ENCODE measurements at regions of chr12 and their contacts with region 1.

Region 1: DNA sequence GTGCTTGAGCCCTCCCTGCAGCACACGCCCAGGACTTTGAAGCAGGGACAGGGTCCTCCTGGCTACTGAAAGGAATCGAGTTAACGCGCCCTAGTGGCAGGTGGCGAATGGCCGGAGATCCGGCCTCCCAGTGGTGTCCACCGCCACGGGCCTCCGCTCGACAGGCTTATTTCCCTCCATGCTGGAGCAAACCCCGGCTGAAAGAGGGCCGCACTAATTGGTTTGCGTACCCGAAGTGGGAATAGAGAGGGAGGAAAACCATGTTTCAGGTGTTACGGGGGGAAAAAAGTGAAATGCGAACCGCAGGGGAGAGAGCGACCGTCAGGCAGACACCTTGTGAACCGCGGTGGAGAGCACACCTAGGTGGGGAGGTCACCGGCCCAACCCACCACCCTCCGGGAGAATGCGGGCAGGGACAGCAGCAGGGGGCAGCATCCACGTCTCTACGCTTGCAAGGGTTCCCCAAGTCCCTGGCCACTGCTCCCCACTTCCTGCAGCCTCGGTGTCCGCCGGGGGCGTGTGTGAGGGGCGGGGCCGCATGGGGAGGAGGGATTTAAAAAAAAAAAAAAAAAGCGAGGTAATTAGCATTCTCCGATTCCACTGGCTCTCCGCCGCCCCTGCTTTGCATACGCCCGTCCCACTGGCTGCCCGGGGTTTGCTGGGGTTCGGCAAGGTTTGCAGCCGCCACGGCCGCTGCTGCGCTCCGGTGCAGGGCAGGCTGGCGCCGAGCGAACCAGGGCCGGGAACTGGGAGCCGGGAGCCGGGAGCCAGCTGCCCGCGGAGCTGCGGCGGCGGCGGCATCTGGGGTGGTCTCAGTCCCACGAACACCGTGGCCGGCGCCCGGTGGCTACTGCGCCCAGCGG is 224.6 kb upstream of the CRY1 start:
- DNase-seq: peak; percentile 89
- H3K4me3 Mint-ChIP-seq: peak overlapping the region; percentile 87
- H3K27ac Mint-ChIP-seq: no peak overlapping the region
- H3K4me1 Mint-ChIP-seq: peaks cover 26% of the 10 kb centered on the region
- H3K27me3 Mint-ChIP-seq: peaks cover 30% of the 10 kb centered on the region

Region 2: DNA sequence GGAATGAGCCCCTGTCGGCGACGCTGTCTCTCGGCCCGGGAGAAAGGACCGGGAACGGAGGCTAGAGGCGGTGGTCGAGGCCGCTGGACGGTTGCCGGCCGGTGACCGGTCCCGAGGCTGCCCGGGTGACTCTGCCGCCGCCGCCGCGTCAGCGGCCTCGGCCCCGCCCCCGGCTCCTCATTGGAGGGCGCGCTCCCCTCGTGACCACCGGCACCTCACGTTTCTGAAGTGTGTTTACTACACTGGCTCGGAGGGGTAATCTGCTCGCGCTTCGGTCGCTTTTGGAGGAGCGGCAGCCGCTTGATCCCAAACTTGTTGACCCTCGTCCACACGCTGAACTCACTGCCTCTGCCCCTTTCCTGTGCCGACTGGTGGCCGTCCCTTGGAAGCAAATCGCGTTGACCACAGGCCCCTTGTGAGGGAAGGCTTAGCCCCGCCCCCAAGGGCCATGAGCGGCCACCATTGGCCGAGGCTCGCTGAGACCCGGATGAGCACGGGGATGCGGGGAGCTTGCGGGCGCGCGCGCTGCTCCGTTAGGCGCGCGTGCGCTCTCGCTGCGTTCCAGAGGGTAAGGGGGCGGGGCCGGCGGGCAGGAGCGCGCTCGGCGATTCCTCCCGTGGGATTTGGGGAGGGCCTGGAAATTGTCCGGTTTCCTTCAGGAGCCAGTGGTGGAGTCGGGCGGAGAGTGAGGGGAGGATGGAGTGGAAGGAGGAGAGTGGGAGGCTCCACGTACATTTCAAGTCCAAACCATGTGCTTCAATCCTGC is 224.4 kb before region 1 on chr12 and contains the start of gene CRY1:
- intact Hi-C with region 1: loop called (anchors 1 kb)
- DNase-seq: peak; percentile 92
- H3K4me3 Mint-ChIP-seq: no peak within 1 kb of the TSS
- H3K27ac Mint-ChIP-seq: peak within 1 kb of the TSS; percentile 60
- H3K4me1 Mint-ChIP-seq: peaks cover 2% of the 10 kb centered on the region
- H3K27me3 Mint-ChIP-seq: peaks cover 10% of the 10 kb centered on the region
- total RNA-seq, gene CRY1: 25.4 and 26.0 TPM in 2 replicates

Region 3: DNA sequence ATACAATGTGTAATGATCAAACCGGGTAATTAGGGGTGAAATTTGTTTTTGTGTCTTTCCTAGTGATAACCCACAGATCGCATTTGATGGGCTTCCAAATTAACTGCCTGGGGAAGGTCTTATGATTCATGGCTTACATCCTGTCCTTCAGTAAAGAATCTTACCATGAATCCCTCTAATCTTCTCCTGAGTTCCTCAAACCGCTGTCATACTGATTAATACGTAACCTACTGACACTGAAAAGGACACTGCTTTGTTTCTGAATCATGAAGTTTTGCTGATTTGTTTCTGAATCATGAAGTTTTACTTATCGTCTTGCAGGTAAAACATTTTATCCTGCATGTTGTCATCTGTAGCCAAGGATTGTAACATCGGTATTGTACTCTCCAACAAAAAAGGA is 172.6 kb before region 1 on chr12:
- intact Hi-C with region 1: no loop called
- DNase-seq: no peak
- H3K4me3 Mint-ChIP-seq: no peak overlapping the region
- H3K27ac Mint-ChIP-seq: no peak overlapping the region
- H3K4me1 Mint-ChIP-seq: no peaks in the 10 kb centered on the region
- H3K27me3 Mint-ChIP-seq: peaks cover 8% of the 10 kb centered on the region

Region 4: DNA sequence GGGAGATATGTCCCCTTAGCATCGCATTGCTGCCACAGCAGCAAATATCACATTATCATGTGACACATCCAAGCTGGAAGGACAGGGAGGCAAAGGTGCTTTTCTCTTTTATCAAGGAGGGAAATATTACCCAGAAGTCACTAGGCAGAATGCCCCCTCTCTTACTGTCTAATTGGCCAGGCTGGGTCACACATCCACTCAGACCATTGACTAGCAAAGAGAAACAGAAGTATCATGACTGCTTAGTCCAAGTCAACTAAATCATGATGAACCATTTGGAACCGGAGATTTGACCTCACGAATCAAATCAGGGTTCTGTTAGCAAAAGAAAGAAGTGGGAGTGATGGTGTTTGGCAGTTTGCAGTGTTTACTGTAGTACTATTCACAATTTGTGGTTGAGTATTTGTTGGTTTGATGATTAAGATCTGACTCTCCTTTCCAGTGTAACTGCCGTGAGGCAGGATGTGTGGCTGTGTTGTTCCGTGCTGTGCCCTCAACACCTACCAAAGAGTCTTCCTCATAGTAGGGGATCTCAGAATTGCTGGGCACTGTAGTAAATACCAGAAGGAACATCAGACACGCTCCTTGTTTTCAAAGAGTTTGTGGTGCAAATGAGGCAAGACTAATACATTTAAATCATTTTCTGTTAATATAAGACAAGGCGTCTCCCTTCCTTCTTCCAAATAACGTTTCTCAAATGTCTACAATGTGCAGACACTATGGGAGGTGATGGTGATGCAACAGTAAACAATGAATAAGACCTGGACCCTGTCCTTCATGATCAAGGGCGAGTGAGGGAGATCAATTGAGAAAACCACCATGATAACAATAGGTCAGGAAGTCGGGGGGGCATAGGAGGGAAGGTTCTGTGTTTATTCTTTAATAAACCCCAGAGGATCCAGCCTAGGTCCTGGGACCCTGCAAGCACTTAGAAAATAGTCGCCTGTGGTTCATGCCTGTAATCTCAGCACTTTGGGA is 30.3 kb before region 1 on chr12:
- intact Hi-C with region 1: loop called (anchors 1 kb)
- DNase-seq: peak; percentile 49
- H3K4me3 Mint-ChIP-seq: peak overlapping the region; percentile 43
- H3K27ac Mint-ChIP-seq: peak overlapping the region; percentile 82
- H3K4me1 Mint-ChIP-seq: peaks cover 18% of the 10 kb centered on the region
- H3K27me3 Mint-ChIP-seq: peaks cover 7% of the 10 kb centered on the region

Region 5: DNA sequence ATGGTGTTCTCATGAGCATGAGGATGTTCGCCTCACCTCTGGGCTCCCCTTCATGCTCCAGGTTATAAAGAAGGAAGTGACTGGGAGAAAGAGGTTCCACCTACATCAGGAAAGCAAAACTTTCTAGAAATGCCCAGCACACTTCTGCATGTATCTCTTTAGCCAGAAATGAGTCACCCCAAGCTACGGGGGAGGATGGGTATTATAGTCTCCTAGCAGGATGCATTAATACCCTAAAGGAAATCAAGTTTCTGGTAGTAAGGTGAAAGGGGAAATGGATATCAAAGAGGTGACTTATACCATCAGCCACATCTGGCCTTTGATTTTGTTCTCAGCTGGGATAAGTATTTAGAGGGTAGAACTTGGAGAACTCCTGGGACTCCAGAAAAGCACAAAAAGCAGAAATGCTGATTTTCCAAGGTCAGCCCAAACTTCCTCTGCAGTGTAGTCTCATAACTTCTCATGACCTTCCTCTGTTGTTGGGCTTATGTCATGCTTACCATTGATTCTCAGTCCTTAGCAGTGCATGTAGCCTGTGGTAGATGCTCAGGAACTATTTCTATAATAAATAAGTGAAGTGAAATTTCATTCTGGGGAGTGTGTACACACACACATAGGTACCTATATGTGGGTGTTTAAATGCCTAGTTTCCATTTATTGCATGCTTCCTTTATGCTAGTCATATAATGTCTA is 15.2 kb before region 1 on chr12:
- intact Hi-C with region 1: no loop called
- DNase-seq: no peak
- H3K4me3 Mint-ChIP-seq: no peak overlapping the region
- H3K27ac Mint-ChIP-seq: no peak overlapping the region
- H3K4me1 Mint-ChIP-seq: no peaks in the 10 kb centered on the region
- H3K27me3 Mint-ChIP-seq: peaks cover 20% of the 10 kb centered on the region

Region 6: GRCh38 chr12:107356266-107356936 is 38.4 kb after region 1 on chr12:
- intact Hi-C with region 1: loop called (anchors 1 kb)
- DNase-seq: no peak
- H3K4me3 Mint-ChIP-seq: no peak overlapping the region
- H3K27ac Mint-ChIP-seq: no peak overlapping the region
- H3K4me1 Mint-ChIP-seq: peaks cover 64% of the 10 kb centered on the region
- H3K27me3 Mint-ChIP-seq: no peaks in the 10 kb centered on the region

Region 7: GRCh38 chr12:107402041-107403022 is 84.3 kb after region 1 on chr12:
- intact Hi-C with region 1: loop called (anchors 1 kb)
- DNase-seq: peak; percentile 40
- H3K4me3 Mint-ChIP-seq: no peak overlapping the region
- H3K27ac Mint-ChIP-seq: no peak overlapping the region
- H3K4me1 Mint-ChIP-seq: peaks cover 19% of the 10 kb centered on the region
- H3K27me3 Mint-ChIP-seq: no peaks in the 10 kb centered on the region

Region 8: DNA sequence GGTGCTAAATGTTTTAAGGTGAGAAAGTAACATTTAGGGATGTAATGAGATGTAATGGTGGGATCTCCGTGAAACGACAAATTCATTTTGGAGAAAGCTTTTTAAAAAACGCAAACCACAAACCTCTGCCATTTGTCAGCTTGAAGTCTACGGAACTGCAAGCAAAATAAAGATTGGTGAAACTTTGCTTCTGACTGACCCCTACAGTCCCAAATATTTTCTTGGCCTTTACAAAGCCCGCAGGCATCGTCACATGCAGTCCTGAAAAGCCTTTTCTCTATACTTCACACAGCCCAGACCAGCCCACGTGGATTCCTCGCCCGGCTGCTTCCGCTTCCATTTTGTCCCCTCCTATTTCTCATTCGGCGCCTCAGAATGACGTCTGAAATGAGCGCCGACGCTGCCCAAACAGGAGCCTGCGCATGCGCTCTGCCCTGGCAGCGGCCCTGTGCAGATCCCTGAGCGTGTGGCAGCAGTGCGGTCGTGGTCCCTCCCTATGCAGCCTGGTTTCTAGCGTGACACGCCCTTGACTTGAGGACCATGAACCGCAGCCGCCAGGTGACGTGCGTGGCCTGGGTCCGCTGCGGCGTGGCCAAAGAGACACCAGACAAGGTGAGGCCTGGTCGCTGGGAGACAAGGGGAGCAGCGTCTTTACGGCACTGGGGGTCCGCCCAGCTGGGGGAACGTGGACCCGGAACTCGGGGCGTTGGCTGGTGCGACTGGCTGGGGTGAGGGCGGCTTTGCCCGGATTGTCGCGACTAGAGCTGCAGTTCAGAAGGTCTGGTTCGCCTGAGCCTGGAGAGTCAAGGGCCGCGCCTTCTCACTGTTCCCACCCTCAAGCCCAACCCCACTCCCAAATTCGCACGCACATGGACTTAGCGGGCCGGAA is 367.6 kb after region 1 on chr12 and contains the start of gene PWP1:
- intact Hi-C with region 1: loop called (anchors 10 kb)
- DNase-seq: peak; percentile 94
- H3K4me3 Mint-ChIP-seq: peak within 1 kb of the TSS; percentile 86
- H3K27ac Mint-ChIP-seq: peak within 1 kb of the TSS; percentile 94
- H3K4me1 Mint-ChIP-seq: peaks cover 21% of the 10 kb centered on the region
- H3K27me3 Mint-ChIP-seq: peaks cover under 1% of the 10 kb centered on the region
- total RNA-seq, gene PWP1: 50.5 and 52.9 TPM in 2 replicates